ENCODE measurements at regions of chr5 and their contacts with region 1.

Region 1: GRCh38 chr5:78359831-78360673 is at the start of gene SCAMP1:
- DNase-seq: peak; percentile 88 to 97 (median 91)
- H3K4me3 ChIP-seq: peak within 1 kb of the TSS; percentile 99
- H3K27ac ChIP-seq: peak within 1 kb of the TSS; percentile 70 to 78
- H3K4me1 ChIP-seq: peaks cover 5% of the 10 kb centered on the region
- H3K27me3 ChIP-seq: no peaks in the 10 kb centered on the region
- CTCF ChIP-seq: peak; percentile 42 to 80 (median 70)
- EP300 ChIP-seq: no peak
- POLR2A ChIP-seq: peak; percentile 88
- total RNA-seq, gene SCAMP1: 26.9 to 38.8 (median 35.7) TPM

Region 2: GRCh38 chr5:78294248-78295034 is 65.6 kb before region 1 on chr5 and contains the start of gene AP3B1:
- intact Hi-C with region 1: loop called in 3 of 4 experiments (anchors 5 kb)
- DNase-seq: peak; percentile 99
- H3K4me3 ChIP-seq: peak within 1 kb of the TSS; percentile 63
- H3K27ac ChIP-seq: peak within 1 kb of the TSS; percentile 58 to 71
- H3K4me1 ChIP-seq: peaks cover 2% of the 10 kb centered on the region
- H3K27me3 ChIP-seq: no peaks in the 10 kb centered on the region
- CTCF ChIP-seq: no peak
- EP300 ChIP-seq: no peak
- POLR2A ChIP-seq: peak; percentile 86
- total RNA-seq, gene AP3B1: 23.2 to 38.8 (median 28.5) TPM

Region 3: DNA sequence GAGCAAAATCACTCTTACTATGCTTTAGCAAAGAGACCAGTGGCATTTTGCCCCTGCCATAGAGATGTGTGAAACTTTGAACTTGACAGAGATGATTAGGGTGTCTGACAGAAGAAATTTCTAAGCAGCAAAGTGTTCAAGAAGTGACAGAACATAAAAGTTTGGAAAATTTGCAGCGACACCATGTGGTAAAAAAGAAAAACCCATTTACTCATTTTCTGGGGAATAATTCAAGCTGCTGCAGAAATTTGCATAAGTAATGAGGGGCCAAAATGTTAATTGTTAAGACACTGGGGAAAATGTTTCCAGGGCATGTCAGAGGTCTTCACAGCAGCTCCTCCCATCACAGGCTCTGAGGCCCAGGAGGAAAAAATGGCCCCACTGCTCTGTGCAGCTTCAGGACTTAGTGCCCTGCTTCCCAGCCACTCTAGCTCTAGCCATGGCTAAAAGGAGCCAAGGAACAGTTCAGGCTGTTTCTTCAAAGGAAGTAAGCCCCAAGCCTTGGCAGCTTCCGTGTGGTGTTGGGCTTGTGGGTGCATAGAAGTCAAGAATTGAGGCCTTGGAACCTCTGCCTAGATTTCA is 59.5 kb before region 1 on chr5:
- intact Hi-C with region 1: loop called in 2 of 4 experiments (anchors 5 kb)
- DNase-seq: no peak
- H3K4me3 ChIP-seq: no peak overlapping the region
- H3K27ac ChIP-seq: no peak overlapping the region
- H3K4me1 ChIP-seq: no peaks in the 10 kb centered on the region
- H3K27me3 ChIP-seq: no peaks in the 10 kb centered on the region
- CTCF ChIP-seq: no peak
- EP300 ChIP-seq: no peak
- POLR2A ChIP-seq: no peak

Region 4: GRCh38 chr5:78771260-78772205 is 411.5 kb after region 1 on chr5:
- intact Hi-C with region 1: no loop called
- DNase-seq: no peak
- H3K4me3 ChIP-seq: no peak overlapping the region
- H3K27ac ChIP-seq: no peak overlapping the region
- H3K4me1 ChIP-seq: no peaks in the 10 kb centered on the region
- H3K27me3 ChIP-seq: no peaks in the 10 kb centered on the region
- CTCF ChIP-seq: no peak
- EP300 ChIP-seq: no peak
- POLR2A ChIP-seq: no peak